Dendritic cell treated with granulocyte-macrophage colony-stimulating factor and Interleukin-4, amounts not matched to agents 40 ng/mL and 50 ng/mL, for 4 days (primary cell): ENCODE measurements at regions of chr3 and their contacts with region 1.

Region 1: GRCh38 chr3:124492811-124493210 is 237.4 kb upstream of the UMPS start:
- H3K4me3 Mint-ChIP-seq: no peak overlapping the region
- H3K27ac Mint-ChIP-seq: no peak overlapping the region
- H3K4me1 Mint-ChIP-seq: peaks cover 8% of the 10 kb centered on the region
- H3K27me3 Mint-ChIP-seq: peaks cover 15% of the 10 kb centered on the region

Region 2: DNA sequence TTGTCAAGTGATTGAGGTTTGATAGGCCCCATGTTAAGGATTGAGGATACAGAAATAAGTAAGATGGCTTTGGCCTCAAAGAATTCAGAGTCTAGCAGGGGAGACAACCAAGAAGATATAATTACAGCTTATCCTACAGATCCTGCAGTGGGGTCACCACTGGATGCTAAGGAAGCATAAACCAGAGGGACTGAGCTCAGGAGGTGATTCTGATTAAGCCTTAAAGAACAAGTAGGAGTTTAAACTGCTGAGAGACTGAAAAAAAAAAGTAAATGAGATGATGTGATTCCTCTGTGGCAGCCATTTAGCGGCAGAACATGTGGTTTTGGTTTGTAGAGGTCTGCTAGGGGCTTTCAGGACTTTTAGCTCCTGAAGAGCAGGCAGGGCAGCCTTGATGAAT is 428.8 kb before region 1 on chr3:
- intact Hi-C with region 1: no loop called
- H3K4me3 Mint-ChIP-seq: no peak overlapping the region
- H3K27ac Mint-ChIP-seq: no peak overlapping the region
- H3K4me1 Mint-ChIP-seq: no peaks in the 10 kb centered on the region
- H3K27me3 Mint-ChIP-seq: peaks cover 2% of the 10 kb centered on the region

Region 3: GRCh38 chr3:124504332-124505059 is 11.7 kb after region 1 on chr3:
- intact Hi-C with region 1: no loop called
- H3K4me3 Mint-ChIP-seq: no peak overlapping the region
- H3K27ac Mint-ChIP-seq: no peak overlapping the region
- H3K4me1 Mint-ChIP-seq: no peaks in the 10 kb centered on the region
- H3K27me3 Mint-ChIP-seq: peaks cover 15% of the 10 kb centered on the region

Region 4: DNA sequence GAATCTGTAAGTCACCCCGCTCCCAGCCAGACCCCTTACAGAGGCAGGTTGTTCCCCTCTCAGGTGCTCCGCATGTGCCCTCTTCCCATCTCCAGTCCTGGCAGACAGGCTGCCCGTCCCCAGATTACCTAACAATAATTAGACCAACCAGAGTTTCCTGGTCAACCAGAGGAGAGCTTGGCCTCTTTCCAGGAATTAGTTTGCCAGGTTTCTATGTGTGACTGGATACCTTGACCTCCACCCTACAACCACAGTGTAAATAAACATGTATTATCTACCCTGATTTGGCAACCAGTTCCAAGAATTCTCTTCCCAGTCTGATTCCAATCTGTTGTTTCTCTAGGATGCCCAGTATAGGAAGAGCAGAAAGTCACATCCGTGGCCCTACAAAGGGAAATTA is 59.4 kb after region 1 on chr3:
- intact Hi-C with region 1: loop called (anchors 2 kb)
- H3K4me3 Mint-ChIP-seq: no peak overlapping the region
- H3K27ac Mint-ChIP-seq: no peak overlapping the region
- H3K4me1 Mint-ChIP-seq: no peaks in the 10 kb centered on the region
- H3K27me3 Mint-ChIP-seq: peaks cover 19% of the 10 kb centered on the region